Spleen (tissue), 13 donors: ENCODE measurements at regions of chr4 and their contacts with region 1.

Region 1: GRCh38 chr4:103443324-103443723 is 245.2 kb upstream of the CENPE start:
- DNase-seq: no peak
- H3K4me3 ChIP-seq: no peak overlapping the region
- H3K27ac ChIP-seq: no peak overlapping the region
- H3K4me1 ChIP-seq: no peaks in the 10 kb centered on the region
- H3K27me3 ChIP-seq: peaks cover 0 to 3% (median 0%) of the 10 kb centered on the region in 7 donors
- CTCF ChIP-seq: no peak
- POLR2A ChIP-seq: no peak

Region 2: GRCh38 chr4:103162176-103162575 is 281.1 kb before region 1 on chr4:
- intact Hi-C with region 1: loop called (anchors 5 kb)
- DNase-seq: no peak
- H3K4me3 ChIP-seq: no peak overlapping the region
- H3K27ac ChIP-seq: no peak overlapping the region
- H3K4me1 ChIP-seq: no peaks in the 10 kb centered on the region
- H3K27me3 ChIP-seq: no peaks in the 10 kb centered on the region
- CTCF ChIP-seq: no peak
- POLR2A ChIP-seq: no peak